T-cell (primary cell): ENCODE measurements at regions of chr20 and their contacts with region 1.

Region 1: DNA sequence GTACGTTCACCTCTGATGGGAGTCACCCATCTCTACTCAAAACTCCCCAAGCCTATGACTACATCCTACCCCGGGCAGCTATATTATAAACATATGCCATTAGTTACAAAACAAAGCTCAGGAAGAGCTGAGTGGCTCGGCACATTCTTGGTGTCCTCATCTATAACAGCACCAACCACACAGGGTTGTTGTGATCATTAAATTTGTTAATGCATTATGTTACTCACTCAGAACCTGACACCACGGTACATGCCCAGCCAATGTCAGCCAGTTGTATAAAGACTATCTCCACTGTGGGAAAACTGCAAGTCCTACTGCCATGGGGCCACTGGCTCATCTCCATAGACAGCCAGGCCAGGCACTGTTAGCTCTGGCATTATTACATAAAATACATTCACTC is 7.7 kb downstream of the CDK5RAP1 start:
- DNase-seq: no peak
- ATAC-seq: no peak
- H3K4me3 ChIP-seq: no peak overlapping the region
- H3K4me3 Mint-ChIP-seq: no peak overlapping the region
- H3K27ac ChIP-seq: no peak overlapping the region
- H3K27ac Mint-ChIP-seq: no peak overlapping the region
- H3K4me1 ChIP-seq: peaks cover 0 to 8% of the 10 kb centered on the region in 2 experiments
- H3K4me1 Mint-ChIP-seq: peaks cover 24 to 31% (median 26%) of the 10 kb centered on the region in 3 donors
- H3K27me3 ChIP-seq: no peaks in the 10 kb centered on the region
- H3K27me3 Mint-ChIP-seq: no peaks in the 10 kb centered on the region

Region 2: GRCh38 chr20:33249456-33249855 is 144.2 kb before region 1 on chr20:
- CTCF ChIA-PET with region 1: no interaction called
- POLR2A ChIA-PET with region 1: no interaction called
- DNase-seq: no peak
- ATAC-seq: no peak
- H3K4me3 ChIP-seq: no peak overlapping the region
- H3K4me3 Mint-ChIP-seq: no peak overlapping the region
- H3K27ac ChIP-seq: no peak overlapping the region
- H3K27ac Mint-ChIP-seq: no peak overlapping the region
- H3K4me1 ChIP-seq: no peaks in the 10 kb centered on the region
- H3K4me1 Mint-ChIP-seq: no peaks in the 10 kb centered on the region
- H3K27me3 ChIP-seq: peaks cover 0 to 3% of the 10 kb centered on the region in 2 experiments
- H3K27me3 Mint-ChIP-seq: peaks cover 5% of the 10 kb centered on the region in 2 donors

Region 3: GRCh38 chr20:33515569-33516216 is 122.1 kb after region 1 on chr20:
- CTCF ChIA-PET with region 1: no interaction called
- POLR2A ChIA-PET with region 1: interaction called in 1 of 2 experiments, 11 read pairs
- DNase-seq: no peak
- ATAC-seq: no peak
- H3K4me3 ChIP-seq: no peak overlapping the region
- H3K4me3 Mint-ChIP-seq: no peak overlapping the region
- H3K27ac ChIP-seq: no peak overlapping the region
- H3K27ac Mint-ChIP-seq: no peak overlapping the region
- H3K4me1 ChIP-seq: no peaks in the 10 kb centered on the region
- H3K4me1 Mint-ChIP-seq: peaks cover 27 to 39% (median 33%) of the 10 kb centered on the region in 3 donors
- H3K27me3 ChIP-seq: no peaks in the 10 kb centered on the region
- H3K27me3 Mint-ChIP-seq: no peaks in the 10 kb centered on the region